Activated naive CD4-positive, alpha-beta T cell treated with anti-CD3 and anti-CD28 coated beads, Interleukin-2, amount 10 ng/mL, durations not matched to agents 7 days and 5 days (primary cell): ENCODE measurements at regions of chr10 and their contacts with region 1.

Region 1: GRCh38 chr10:58384999-58385783 is at the start of gene TFAM:
- DNase-seq: peak; percentile 97
- H3K4me3 Mint-ChIP-seq: peak within 1 kb of the TSS; percentile 99
- H3K27ac Mint-ChIP-seq: peak within 1 kb of the TSS; percentile 97
- H3K4me1 Mint-ChIP-seq: peaks cover 44% of the 10 kb centered on the region
- H3K27me3 Mint-ChIP-seq: no peaks in the 10 kb centered on the region

Region 2: GRCh38 chr10:58299580-58299979 is 85.6 kb before region 1 on chr10:
- CTCF ChIA-PET with region 1: interaction called, 20 read pairs
- DNase-seq: peak; percentile 73
- H3K4me3 Mint-ChIP-seq: no peak overlapping the region
- H3K27ac Mint-ChIP-seq: no peak overlapping the region
- H3K4me1 Mint-ChIP-seq: no peaks in the 10 kb centered on the region
- H3K27me3 Mint-ChIP-seq: peaks cover 5% of the 10 kb centered on the region

Region 3: GRCh38 chr10:58396057-58396456 is 10.9 kb after region 1 on chr10:
- CTCF ChIA-PET with region 1: no interaction called
- DNase-seq: no peak
- H3K4me3 Mint-ChIP-seq: no peak overlapping the region
- H3K27ac Mint-ChIP-seq: no peak overlapping the region
- H3K4me1 Mint-ChIP-seq: peaks cover 6% of the 10 kb centered on the region
- H3K27me3 Mint-ChIP-seq: no peaks in the 10 kb centered on the region

Region 4: GRCh38 chr10:58952747-58953466 is 567.7 kb after region 1 on chr10:
- CTCF ChIA-PET with region 1: no interaction called
- DNase-seq: peak; percentile 22
- H3K4me3 Mint-ChIP-seq: no peak overlapping the region
- H3K27ac Mint-ChIP-seq: no peak overlapping the region
- H3K4me1 Mint-ChIP-seq: no peaks in the 10 kb centered on the region
- H3K27me3 Mint-ChIP-seq: no peaks in the 10 kb centered on the region